ENCODE measurements at regions of chr12 and their contacts with region 1.

Region 1: GRCh38 chr12:96303653-96304052 is 96.6 kb downstream of the CDK17 start:
- DNase-seq: no peak
- ATAC-seq: no peak
- H3K4me3 ChIP-seq: no peak overlapping the region
- H3K4me3 Mint-ChIP-seq: no peak overlapping the region
- H3K27ac ChIP-seq: no peak overlapping the region
- H3K27ac Mint-ChIP-seq: no peak overlapping the region
- H3K4me1 ChIP-seq: peaks cover 6% of the 10 kb centered on the region
- H3K4me1 Mint-ChIP-seq: peaks cover 21 to 41% of the 10 kb centered on the region in 2 donors
- H3K27me3 ChIP-seq: no peaks in the 10 kb centered on the region
- H3K27me3 Mint-ChIP-seq: no peaks in the 10 kb centered on the region
- CTCF ChIP-seq: no peak

Region 2: DNA sequence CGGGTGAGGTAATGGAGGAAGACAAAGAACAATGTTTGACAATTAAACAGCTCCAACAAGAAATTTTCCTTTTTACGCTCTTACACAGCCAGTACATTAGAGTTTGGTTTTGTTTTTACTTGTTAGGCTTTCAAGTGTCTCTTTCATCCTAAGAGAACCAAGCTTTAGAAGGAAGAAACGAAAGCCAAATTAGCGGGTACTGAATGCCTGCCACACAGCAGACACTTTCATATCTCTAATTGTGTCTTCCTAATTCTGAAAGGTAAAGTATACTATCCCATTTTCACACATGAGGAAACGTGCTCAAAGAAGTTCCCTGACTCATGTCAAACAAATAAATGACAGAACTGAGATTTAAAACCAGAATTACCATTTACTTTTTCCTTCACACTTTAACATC is 31.6 kb after region 1 on chr12:
- intact Hi-C with region 1: loop called (anchors 5 kb)
- DNase-seq: peak in 1 of 2 donors; percentile 34
- ATAC-seq: no peak
- H3K4me3 ChIP-seq: no peak overlapping the region
- H3K4me3 Mint-ChIP-seq: no peak overlapping the region
- H3K27ac ChIP-seq: no peak overlapping the region
- H3K27ac Mint-ChIP-seq: no peak overlapping the region
- H3K4me1 ChIP-seq: no peaks in the 10 kb centered on the region
- H3K4me1 Mint-ChIP-seq: peaks cover 48 to 57% of the 10 kb centered on the region in 2 donors
- H3K27me3 ChIP-seq: no peaks in the 10 kb centered on the region
- H3K27me3 Mint-ChIP-seq: no peaks in the 10 kb centered on the region
- CTCF ChIP-seq: no peak